ENCODE measurements at regions of chr19 and their contacts with region 1.

Region 1: DNA sequence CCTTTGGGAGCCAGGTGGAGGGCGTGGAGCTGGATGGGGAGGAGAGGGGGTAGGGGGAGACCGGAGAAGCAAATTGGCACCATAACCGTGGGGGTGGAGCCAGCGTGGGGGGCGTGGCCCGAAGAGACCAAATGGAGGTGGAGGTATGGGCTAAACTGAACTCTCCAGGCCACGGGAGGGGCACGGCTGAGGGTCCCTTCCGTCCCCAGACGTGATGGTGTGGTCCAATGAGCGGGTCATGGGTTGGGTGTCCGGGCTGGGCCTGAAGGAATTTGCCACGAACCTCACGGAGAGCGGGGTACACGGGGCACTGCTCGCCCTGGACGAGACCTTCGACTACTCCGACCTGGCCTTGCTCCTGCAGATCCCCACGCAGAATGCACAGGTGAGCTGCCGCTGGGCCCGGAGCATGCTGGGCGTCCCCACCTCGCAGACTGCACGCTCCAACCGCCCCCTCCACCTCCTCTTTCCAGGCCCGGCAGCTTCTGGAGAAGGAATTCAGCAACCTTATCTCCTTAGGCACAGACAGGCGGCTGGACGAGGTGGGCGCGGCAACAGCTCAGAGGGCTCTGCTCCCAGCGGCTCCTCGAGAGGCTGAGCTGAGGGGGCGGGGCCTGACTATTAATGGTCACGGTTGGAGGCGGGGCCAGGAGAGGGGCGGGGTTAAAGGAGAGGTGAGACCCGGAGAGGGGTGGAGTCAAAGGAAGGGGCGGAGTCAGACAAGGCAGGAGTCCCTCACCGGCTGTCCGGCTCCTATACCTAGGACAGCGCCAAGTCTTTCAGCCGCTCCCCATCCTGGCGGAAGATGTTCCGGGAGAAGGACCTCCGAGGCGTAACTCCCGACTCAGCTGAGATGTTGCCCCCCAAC is 6.2 kb downstream of the HRC start:
- DNase-seq: peak; percentile 98 to 100 (median 99)
- H3K4me3 ChIP-seq: peak overlapping the region in 3 of 4 donors; percentile 49 to 73 (median 54)
- H3K27ac ChIP-seq: peak overlapping the region; percentile 58 to 94 (median 78)
- H3K4me1 ChIP-seq: peaks cover 15 to 28% of the 10 kb centered on the region in 2 donors
- H3K27me3 ChIP-seq: no peaks in the 10 kb centered on the region
- CTCF ChIP-seq: no peak
- POLR2A ChIP-seq: peak; percentile 28 to 78

Region 2: DNA sequence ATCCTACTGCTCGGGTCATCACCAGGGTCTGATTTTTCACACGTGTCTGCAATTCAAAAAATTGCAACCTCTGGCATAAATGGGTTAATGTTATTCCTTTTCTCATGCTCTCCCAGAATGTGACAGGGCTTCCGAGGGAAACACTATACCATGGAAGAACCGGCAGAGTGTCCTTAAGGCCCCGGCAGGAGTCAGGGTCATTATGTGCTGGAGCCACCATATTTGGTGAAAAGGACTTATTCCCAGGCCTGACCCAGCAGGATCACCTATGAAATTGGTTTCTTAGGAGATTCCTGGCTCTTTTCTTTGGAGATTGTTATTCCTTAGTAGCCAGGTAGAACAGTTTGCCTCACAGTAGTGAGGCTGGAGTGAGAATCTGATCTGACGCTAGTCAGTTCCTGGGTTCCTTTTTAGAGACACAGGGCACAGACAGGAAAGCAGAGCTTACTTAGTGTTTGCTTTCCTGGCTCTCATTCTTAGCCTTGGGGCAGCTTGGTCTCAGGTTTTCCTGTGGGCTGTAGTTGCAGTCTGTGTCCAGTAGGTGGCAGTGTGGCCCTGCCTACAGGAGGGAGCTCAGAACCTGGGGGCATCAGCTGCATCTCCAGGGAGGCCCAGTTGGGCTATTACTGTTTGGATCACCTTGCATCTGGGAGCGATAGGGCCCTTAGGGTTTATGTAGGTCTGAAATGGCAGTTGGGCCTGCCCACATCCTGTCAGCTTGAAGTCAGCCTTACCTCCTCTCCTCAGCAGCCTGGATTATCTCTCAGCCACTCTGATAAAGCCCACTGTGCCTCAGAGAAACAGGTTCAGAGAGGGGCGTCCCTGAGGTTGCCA is 51.3 kb before region 1 on chr19:
- intact Hi-C with region 1: loop called (anchors 2 to 5 kb)
- DNase-seq: peak; percentile 58 to 89 (median 74)
- H3K4me3 ChIP-seq: no peak overlapping the region
- H3K27ac ChIP-seq: peak overlapping the region in 2 of 5 donors; percentile 12 to 32
- H3K4me1 ChIP-seq: peaks cover 0 to 9% of the 10 kb centered on the region in 2 donors
- H3K27me3 ChIP-seq: no peaks in the 10 kb centered on the region
- CTCF ChIP-seq: peak; percentile 96 to 99 (median 98)
- POLR2A ChIP-seq: no peak

Region 3: GRCh38 chr19:49104229-49104864 is 44.7 kb before region 1 on chr19:
- intact Hi-C with region 1: loop called in 1 of 2 experiments (anchors 5 kb)
- DNase-seq: no peak
- H3K4me3 ChIP-seq: no peak overlapping the region
- H3K27ac ChIP-seq: no peak overlapping the region
- H3K4me1 ChIP-seq: peaks cover 0 to 5% of the 10 kb centered on the region in 2 donors
- H3K27me3 ChIP-seq: no peaks in the 10 kb centered on the region
- CTCF ChIP-seq: no peak
- POLR2A ChIP-seq: no peak

Region 4: GRCh38 chr19:49196527-49197240 is 47.7 kb after region 1 on chr19:
- intact Hi-C with region 1: loop called in 1 of 2 experiments (anchors 5 kb)
- DNase-seq: no peak
- H3K4me3 ChIP-seq: no peak overlapping the region
- H3K27ac ChIP-seq: no peak overlapping the region
- H3K4me1 ChIP-seq: no peaks in the 10 kb centered on the region
- H3K27me3 ChIP-seq: no peaks in the 10 kb centered on the region
- CTCF ChIP-seq: no peak
- POLR2A ChIP-seq: no peak

Region 5: GRCh38 chr19:49272184-49272583 is 123.2 kb after region 1 on chr19:
- intact Hi-C with region 1: no loop called
- DNase-seq: no peak
- H3K4me3 ChIP-seq: no peak overlapping the region
- H3K27ac ChIP-seq: no peak overlapping the region
- H3K4me1 ChIP-seq: no peaks in the 10 kb centered on the region
- H3K27me3 ChIP-seq: peaks cover 4% of the 10 kb centered on the region
- CTCF ChIP-seq: no peak
- POLR2A ChIP-seq: no peak

Measured in adrenal gland (tissue), 19 donors.